T-cell (primary cell): ENCODE measurements at regions of chr5 and their contacts with region 1.

Region 1: DNA sequence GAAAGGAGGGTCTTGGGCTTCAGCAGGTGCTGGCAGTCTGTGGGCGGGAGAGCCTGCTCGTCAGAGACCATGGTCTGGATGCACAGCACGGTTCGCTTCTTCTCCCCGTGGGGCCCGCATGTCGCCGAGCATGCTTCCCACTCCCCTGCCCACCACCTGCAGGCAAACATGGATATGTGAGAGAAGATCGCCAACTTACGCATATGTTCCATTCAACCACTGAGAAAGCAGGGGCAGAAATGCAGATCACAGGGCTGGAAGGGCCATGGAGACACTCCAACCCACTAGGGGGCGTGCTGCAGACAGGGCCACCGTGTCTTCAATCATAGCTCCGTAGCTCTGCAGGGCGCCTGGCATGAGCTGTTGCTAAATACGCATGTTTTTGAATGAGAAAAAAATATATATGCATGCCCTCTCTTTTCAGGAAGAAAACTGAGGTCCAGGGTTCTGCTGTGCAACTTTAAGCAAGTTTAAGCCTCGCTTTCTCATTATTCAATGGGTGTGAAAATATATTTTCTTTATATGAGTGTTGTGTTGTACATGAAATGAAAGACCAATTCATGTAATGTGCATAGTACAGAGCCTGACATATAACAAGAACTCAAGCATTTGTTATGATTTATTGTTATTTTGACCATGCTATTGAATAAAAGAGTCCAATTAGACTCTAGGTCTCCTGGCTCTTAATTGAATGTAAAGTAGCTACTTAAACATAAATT is 148.0 kb downstream of the TARS1 start:
- DNase-seq: peak in 16 of 35 experiments; percentile 1 to 32 (median 8)
- ATAC-seq: no peak
- H3K4me3 ChIP-seq: no peak overlapping the region
- H3K4me3 Mint-ChIP-seq: no peak overlapping the region
- H3K27ac ChIP-seq: no peak overlapping the region
- H3K27ac Mint-ChIP-seq: no peak overlapping the region
- H3K4me1 ChIP-seq: no peaks in the 10 kb centered on the region
- H3K4me1 Mint-ChIP-seq: no peaks in the 10 kb centered on the region
- H3K27me3 ChIP-seq: peaks cover 0 to 3% of the 10 kb centered on the region in 2 experiments
- H3K27me3 Mint-ChIP-seq: no peaks in the 10 kb centered on the region

Region 2: GRCh38 chr5:33936004-33936380 is 347.2 kb after region 1 on chr5:
- CTCF ChIA-PET with region 1: interaction called, 7 to 14 read pairs
- POLR2A ChIA-PET with region 1: no interaction called
- DNase-seq: peak in 25 of 35 experiments; percentile 2 to 44 (median 12)
- ATAC-seq: peak in 1 of 4 experiments; percentile 63
- H3K4me3 ChIP-seq: peak overlapping the region in 1 of 2 donors; percentile 35
- H3K4me3 Mint-ChIP-seq: no peak overlapping the region
- H3K27ac ChIP-seq: no peak overlapping the region
- H3K27ac Mint-ChIP-seq: no peak overlapping the region
- H3K4me1 ChIP-seq: peaks cover 0 to 7% of the 10 kb centered on the region in 2 experiments
- H3K4me1 Mint-ChIP-seq: peaks cover 0 to 7% (median 6%) of the 10 kb centered on the region in 3 donors
- H3K27me3 ChIP-seq: peaks cover 12 to 33% of the 10 kb centered on the region in 2 experiments
- H3K27me3 Mint-ChIP-seq: peaks cover 40 to 57% of the 10 kb centered on the region in 2 donors

Region 3: GRCh38 chr5:34022121-34022705 is 433.4 kb after region 1 on chr5:
- CTCF ChIA-PET with region 1: no interaction called
- POLR2A ChIA-PET with region 1: no interaction called
- DNase-seq: peak in 7 of 35 experiments; percentile 6 to 29 (median 12)
- ATAC-seq: peak; percentile 75 to 96 (median 80)
- H3K4me3 ChIP-seq: peak overlapping the region in 1 of 2 donors; percentile 18
- H3K4me3 Mint-ChIP-seq: peak overlapping the region in 1 of 3 donors; percentile 13
- H3K27ac ChIP-seq: peak overlapping the region; percentile 30
- H3K27ac Mint-ChIP-seq: peak overlapping the region; percentile 87 to 90
- H3K4me1 ChIP-seq: peaks cover 7 to 12% of the 10 kb centered on the region in 2 experiments
- H3K4me1 Mint-ChIP-seq: peaks cover 19 to 26% (median 19%) of the 10 kb centered on the region in 3 donors
- H3K27me3 ChIP-seq: no peaks in the 10 kb centered on the region
- H3K27me3 Mint-ChIP-seq: no peaks in the 10 kb centered on the region

Region 4: DNA sequence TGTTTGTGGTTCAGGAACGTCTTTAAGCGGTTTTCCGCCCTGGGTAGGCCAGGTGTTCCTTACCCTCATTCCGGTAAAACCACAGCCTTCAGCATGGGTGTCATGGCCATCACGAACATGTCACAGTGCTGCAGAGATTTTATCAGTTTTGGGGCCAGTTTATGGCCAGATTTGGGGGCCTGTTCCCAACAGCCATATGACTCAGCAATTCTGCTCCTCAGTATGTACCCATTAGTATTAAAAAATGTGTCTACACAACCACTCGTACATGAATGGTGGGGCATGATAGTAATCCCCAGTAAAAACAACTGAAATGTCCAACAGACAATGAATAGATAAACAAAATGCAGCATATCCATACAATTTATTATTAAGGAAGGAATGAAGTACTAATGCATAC is 1198.2 kb after region 1 on chr5:
- CTCF ChIA-PET with region 1: interaction called in 1 of 2 experiments, 12 read pairs
- POLR2A ChIA-PET with region 1: no interaction called
- DNase-seq: no peak
- ATAC-seq: no peak
- H3K4me3 ChIP-seq: no peak overlapping the region
- H3K4me3 Mint-ChIP-seq: no peak overlapping the region
- H3K27ac ChIP-seq: no peak overlapping the region
- H3K27ac Mint-ChIP-seq: no peak overlapping the region
- H3K4me1 ChIP-seq: no peaks in the 10 kb centered on the region
- H3K4me1 Mint-ChIP-seq: no peaks in the 10 kb centered on the region
- H3K27me3 ChIP-seq: peaks cover 0 to 5% of the 10 kb centered on the region in 2 experiments
- H3K27me3 Mint-ChIP-seq: peaks cover 6 to 13% of the 10 kb centered on the region in 2 donors